ENCODE measurements at regions of chr17 and their contacts with region 1.

Region 1: DNA sequence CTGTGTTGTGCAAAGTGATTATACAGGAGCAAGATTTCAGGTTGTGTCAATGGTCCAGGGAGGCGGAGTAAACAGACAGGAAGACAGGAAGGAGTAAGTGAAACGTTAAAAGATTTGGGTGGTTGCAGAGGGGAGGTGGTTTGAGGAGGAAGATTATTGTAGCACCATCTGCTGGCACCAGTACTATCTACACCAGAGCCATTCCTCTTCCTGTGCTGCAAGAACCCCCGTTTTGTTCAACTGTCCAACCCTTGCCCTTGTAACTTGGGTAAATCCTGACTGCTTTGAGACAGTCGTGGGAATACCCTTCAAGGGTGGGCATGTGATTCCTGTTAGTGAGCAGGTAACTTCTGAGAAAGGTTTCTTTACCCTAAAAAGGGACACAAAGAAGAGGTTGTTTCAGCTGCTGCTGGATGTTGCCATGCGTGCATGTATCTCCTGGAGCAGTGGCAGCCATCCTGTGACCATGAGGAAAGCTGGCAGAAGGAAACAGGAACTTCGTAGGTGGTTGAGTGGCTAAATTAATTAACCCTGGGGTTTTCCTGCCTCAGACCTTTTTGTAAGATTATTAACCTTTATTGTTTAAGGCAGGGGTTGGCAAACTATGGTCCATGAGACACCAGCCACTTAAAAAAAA is 124.1 kb downstream of the PRKCA start:
- DNase-seq: peak; percentile 69
- H3K4me3 Mint-ChIP-seq: peak overlapping the region; percentile 5
- H3K27ac Mint-ChIP-seq: peak overlapping the region; percentile 80
- H3K4me1 Mint-ChIP-seq: peaks cover 80% of the 10 kb centered on the region
- H3K27me3 Mint-ChIP-seq: no peaks in the 10 kb centered on the region

Region 2: GRCh38 chr17:66255112-66255511 is 171.4 kb before region 1 on chr17:
- CTCF ChIA-PET with region 1: interaction called, 12 read pairs
- DNase-seq: peak; percentile 43
- H3K4me3 Mint-ChIP-seq: no peak overlapping the region
- H3K27ac Mint-ChIP-seq: no peak overlapping the region
- H3K4me1 Mint-ChIP-seq: peaks cover 15% of the 10 kb centered on the region
- H3K27me3 Mint-ChIP-seq: no peaks in the 10 kb centered on the region

Measured in activated naive CD4-positive, alpha-beta T cell treated with anti-CD3 and anti-CD28 coated beads, Interleukin-2, amount 10 ng/mL, durations not matched to agents 7 days and 5 days (primary cell).